ENCODE measurements at regions of chr13 and their contacts with region 1.

Region 1: GRCh38 chr13:50801087-50801931 is 42.2 kb downstream of the DLEU7 start:
- H3K4me3 Mint-ChIP-seq: no peak overlapping the region
- H3K27ac Mint-ChIP-seq: no peak overlapping the region
- H3K4me1 Mint-ChIP-seq: peaks cover 27% of the 10 kb centered on the region
- H3K27me3 Mint-ChIP-seq: no peaks in the 10 kb centered on the region

Region 2: GRCh38 chr13:49976314-49977258 is 824.7 kb before region 1 on chr13:
- intact Hi-C with region 1: loop called (anchors 2 kb)
- H3K4me3 Mint-ChIP-seq: no peak overlapping the region
- H3K27ac Mint-ChIP-seq: no peak overlapping the region
- H3K4me1 Mint-ChIP-seq: peaks cover 9% of the 10 kb centered on the region
- H3K27me3 Mint-ChIP-seq: no peaks in the 10 kb centered on the region

Region 3: GRCh38 chr13:50081679-50082425 is 719.5 kb before region 1 on chr13:
- intact Hi-C with region 1: loop called (anchors 2 kb)
- H3K4me3 Mint-ChIP-seq: peak overlapping the region; percentile 98
- H3K27ac Mint-ChIP-seq: peak overlapping the region; percentile 91
- H3K4me1 Mint-ChIP-seq: peaks cover 52% of the 10 kb centered on the region
- H3K27me3 Mint-ChIP-seq: no peaks in the 10 kb centered on the region

Region 4: DNA sequence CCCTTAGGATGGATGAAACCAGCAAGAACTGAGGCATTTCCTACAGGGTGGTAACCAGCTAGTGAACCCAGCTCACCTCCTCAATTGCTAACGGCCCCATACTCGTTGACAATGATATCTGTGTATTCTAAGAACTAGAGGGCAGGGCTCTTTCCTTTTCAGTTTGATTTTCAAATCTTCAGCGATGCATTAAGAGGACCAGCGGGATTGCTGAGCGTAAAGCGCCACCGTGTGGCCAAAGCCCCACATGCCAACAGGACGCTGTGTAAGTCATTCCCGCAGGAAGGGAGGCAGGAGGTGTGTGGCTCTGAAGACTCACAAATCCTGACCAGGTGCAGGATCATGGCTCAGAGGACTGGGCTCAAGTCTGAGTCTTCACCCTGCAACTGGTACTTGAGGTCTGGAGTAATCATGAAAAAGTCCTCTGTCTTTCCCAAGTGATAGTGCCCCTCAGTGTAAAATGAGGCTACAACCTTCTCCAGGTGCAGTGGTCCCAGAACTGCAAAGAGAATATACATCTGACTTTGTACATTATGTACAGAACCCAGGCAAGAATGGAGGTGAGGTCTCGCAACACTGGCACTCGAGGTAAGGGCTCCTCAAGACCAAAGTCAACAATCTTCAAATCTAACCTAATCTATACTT is 268.8 kb after region 1 on chr13:
- intact Hi-C with region 1: loop called (anchors 10 kb)
- H3K4me3 Mint-ChIP-seq: no peak overlapping the region
- H3K27ac Mint-ChIP-seq: no peak overlapping the region
- H3K4me1 Mint-ChIP-seq: peaks cover 11% of the 10 kb centered on the region
- H3K27me3 Mint-ChIP-seq: peaks cover 24% of the 10 kb centered on the region

Measured in dendritic cell treated with granulocyte-macrophage colony-stimulating factor and Interleukin-4, amounts not matched to agents 40 ng/mL and 50 ng/mL, for 4 days (primary cell).